ENCODE measurements at regions of chr6 and their contacts with region 1.

Region 1: GRCh38 chr6:111841822-111842221 is 31.4 kb downstream of the FYN start:
- DNase-seq: peak in 6 of 9 experiments; percentile 46 to 74 (median 60)
- ATAC-seq: no peak
- H3K4me3 ChIP-seq: peak overlapping the region in 1 of 2 experiments; percentile 16
- H3K4me3 Mint-ChIP-seq: no peak overlapping the region
- H3K27ac ChIP-seq: peak overlapping the region in 1 of 2 experiments; percentile 75
- H3K27ac Mint-ChIP-seq: no peak overlapping the region
- H3K4me1 ChIP-seq: peaks cover 100% of the 10 kb centered on the region
- H3K4me1 Mint-ChIP-seq: peaks cover 36% of the 10 kb centered on the region
- H3K27me3 ChIP-seq: no peaks in the 10 kb centered on the region
- H3K27me3 Mint-ChIP-seq: no peaks in the 10 kb centered on the region
- CTCF ChIP-seq: no peak

Region 2: DNA sequence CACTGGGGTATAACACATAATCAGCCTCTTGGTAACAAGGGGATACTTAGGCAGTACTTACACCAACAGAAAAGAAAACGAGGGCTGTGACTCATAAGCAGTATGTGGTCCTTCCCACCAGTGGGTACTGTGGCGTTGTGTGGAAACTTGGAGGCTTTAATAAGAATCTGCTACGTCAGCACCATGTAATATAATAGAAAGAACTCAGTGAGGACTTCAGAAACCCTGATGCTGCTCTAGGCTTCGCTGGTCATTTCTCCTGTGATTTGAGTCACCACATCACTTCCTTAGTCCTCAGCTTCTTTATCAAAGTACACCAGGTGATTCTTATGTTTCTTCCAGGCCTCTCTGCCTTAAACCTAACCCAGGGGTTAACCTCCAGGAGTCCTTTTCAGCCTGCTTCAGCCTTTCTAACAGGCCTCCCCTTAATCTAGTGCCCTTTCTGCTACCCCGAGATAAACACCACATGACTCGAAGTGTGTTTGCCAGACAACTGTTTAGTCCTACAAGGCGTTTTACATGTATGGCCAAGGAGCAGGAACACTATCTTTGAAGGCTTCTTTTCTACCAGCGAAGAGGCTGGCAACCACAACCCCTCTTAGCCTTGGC is 37.1 kb before region 1 on chr6:
- CTCF ChIA-PET with region 1: interaction called, 6 read pairs
- POLR2A ChIA-PET with region 1: no interaction called
- intact Hi-C with region 1: loop called (anchors 2 kb)
- DNase-seq: peak; percentile 27 to 92 (median 62)
- ATAC-seq: peak; percentile 73
- H3K4me3 ChIP-seq: no peak overlapping the region
- H3K4me3 Mint-ChIP-seq: peak overlapping the region; percentile 60
- H3K27ac ChIP-seq: peak overlapping the region; percentile 16 to 84
- H3K27ac Mint-ChIP-seq: peak overlapping the region; percentile 97
- H3K4me1 ChIP-seq: peaks cover 70% of the 10 kb centered on the region
- H3K4me1 Mint-ChIP-seq: peaks cover 95% of the 10 kb centered on the region
- H3K27me3 ChIP-seq: no peaks in the 10 kb centered on the region
- H3K27me3 Mint-ChIP-seq: no peaks in the 10 kb centered on the region
- CTCF ChIP-seq: peak; percentile 53

Region 3: DNA sequence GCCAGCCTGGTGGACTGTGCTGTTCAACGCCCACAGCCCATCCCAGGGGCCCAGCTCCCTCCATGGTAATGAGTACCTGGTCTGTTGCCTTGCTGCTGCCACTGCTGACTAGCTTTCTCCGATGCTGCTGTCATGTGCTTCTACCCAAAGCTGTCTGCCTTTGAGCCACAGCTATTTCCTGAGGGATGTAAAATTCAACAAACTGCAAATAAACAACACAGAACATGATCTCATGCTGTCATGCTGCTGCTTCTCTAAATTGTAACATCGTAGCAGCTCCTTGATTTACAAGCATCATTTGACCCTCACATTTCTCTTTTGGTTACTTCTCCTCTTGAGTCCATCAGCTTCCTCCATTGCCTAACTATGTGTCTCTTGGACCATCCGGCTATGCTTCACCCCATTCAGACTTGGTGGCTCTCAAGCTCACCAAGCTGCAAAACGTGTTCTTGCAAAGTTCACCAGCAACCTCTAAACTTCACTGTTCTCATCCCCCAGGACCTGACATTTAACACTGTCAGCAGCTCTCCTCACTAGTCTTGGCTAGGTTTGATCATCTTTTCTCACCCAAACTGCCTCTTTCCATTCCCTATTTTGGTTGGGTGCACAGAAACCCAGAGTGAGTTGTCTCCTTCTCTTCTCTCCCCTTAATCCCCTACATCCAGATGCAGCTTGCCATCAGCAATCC is 23.1 kb before region 1 on chr6:
- CTCF ChIA-PET with region 1: interaction called, 5 read pairs
- POLR2A ChIA-PET with region 1: interaction called, 6 read pairs
- intact Hi-C with region 1: loop called in 1 of 2 experiments (anchors 2 kb)
- DNase-seq: peak in 1 of 9 experiments; percentile 50
- ATAC-seq: peak; percentile 59
- H3K4me3 ChIP-seq: no peak overlapping the region
- H3K4me3 Mint-ChIP-seq: peak overlapping the region; percentile 42
- H3K27ac ChIP-seq: peak overlapping the region in 1 of 2 experiments; percentile 41
- H3K27ac Mint-ChIP-seq: peak overlapping the region; percentile 85
- H3K4me1 ChIP-seq: peaks cover 36% of the 10 kb centered on the region
- H3K4me1 Mint-ChIP-seq: peaks cover 72% of the 10 kb centered on the region
- H3K27me3 ChIP-seq: no peaks in the 10 kb centered on the region
- H3K27me3 Mint-ChIP-seq: no peaks in the 10 kb centered on the region
- CTCF ChIP-seq: no peak

Region 4: GRCh38 chr6:111823831-111824607 is 17.8 kb before region 1 on chr6:
- CTCF ChIA-PET with region 1: interaction called, 5 read pairs
- POLR2A ChIA-PET with region 1: interaction called, 6 read pairs
- intact Hi-C with region 1: loop called in 1 of 2 experiments (anchors 2 kb)
- DNase-seq: peak in 3 of 9 experiments; percentile 40 to 81 (median 65)
- ATAC-seq: peak; percentile 82
- H3K4me3 ChIP-seq: no peak overlapping the region
- H3K4me3 Mint-ChIP-seq: peak overlapping the region; percentile 20
- H3K27ac ChIP-seq: peak overlapping the region in 1 of 2 experiments; percentile 71
- H3K27ac Mint-ChIP-seq: peak overlapping the region; percentile 92
- H3K4me1 ChIP-seq: peaks cover 48% of the 10 kb centered on the region
- H3K4me1 Mint-ChIP-seq: peaks cover 84% of the 10 kb centered on the region
- H3K27me3 ChIP-seq: no peaks in the 10 kb centered on the region
- H3K27me3 Mint-ChIP-seq: no peaks in the 10 kb centered on the region
- CTCF ChIP-seq: no peak